ENCODE measurements at regions of chr3 and their contacts with region 1.

Region 1: DNA sequence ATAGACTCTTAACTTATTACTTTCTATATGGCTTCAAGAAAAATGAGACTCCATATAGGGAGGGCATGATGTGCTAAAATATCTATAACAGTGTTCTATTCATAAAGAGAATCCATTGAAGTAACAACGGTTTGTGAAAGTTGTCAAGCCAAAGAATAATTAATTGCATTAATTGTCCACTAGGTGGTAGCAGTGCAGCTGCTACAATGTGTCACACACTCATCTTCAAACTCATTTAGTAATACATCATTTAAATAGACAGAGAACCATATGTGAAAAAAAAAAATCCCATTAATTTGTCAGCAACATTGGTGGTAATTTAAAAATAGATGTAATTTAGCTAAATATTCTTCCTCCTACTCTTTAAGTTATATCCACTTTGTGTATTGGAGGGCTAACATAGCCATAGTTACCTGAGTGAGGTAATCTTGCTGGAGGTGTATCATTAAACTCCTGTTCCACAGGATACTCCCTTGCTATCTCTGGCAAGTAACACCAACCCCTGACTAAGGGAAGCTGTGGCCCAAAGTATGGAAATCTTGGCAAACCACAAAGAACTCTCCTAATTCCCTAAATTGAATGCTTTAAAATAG is 3.7 kb upstream of the CPA3 start:
- DNase-seq: no peak
- ATAC-seq: peak; percentile 80
- H3K4me3 ChIP-seq: no peak overlapping the region
- H3K27ac ChIP-seq: no peak overlapping the region
- H3K4me1 ChIP-seq: no peaks in the 10 kb centered on the region
- H3K27me3 ChIP-seq: peaks cover 0 to 8% of the 10 kb centered on the region in 2 experiments; a peak in 1 of 4 replicates
- CTCF ChIP-seq: peak; percentile 45 to 65 (median 46); a peak in 5 of 6 replicates
- EP300 ChIP-seq: no peak
- POLR2A ChIP-seq: no peak
- RAD21 ChIP-seq: peak; percentile 71

Region 2: GRCh38 chr3:148077318-148077923 is 784.0 kb before region 1 on chr3:
- CTCF ChIA-PET with region 1: no interaction called
- POLR2A ChIA-PET with region 1: no interaction called
- RAD21 ChIA-PET with region 1: no interaction called
- SMC1A ChIA-PET with region 1: no interaction called
- in situ Hi-C with region 1: no loop called
- intact Hi-C with region 1: no loop called
- DNase-seq: no peak
- ATAC-seq: peak; percentile 76
- H3K4me3 ChIP-seq: no peak overlapping the region
- H3K27ac ChIP-seq: no peak overlapping the region
- H3K4me1 ChIP-seq: no peaks in the 10 kb centered on the region
- H3K27me3 ChIP-seq: no peaks in the 10 kb centered on the region
- CTCF ChIP-seq: peak; percentile 32 to 50 (median 36); a peak in 4 of 6 replicates
- EP300 ChIP-seq: no peak
- POLR2A ChIP-seq: no peak
- RAD21 ChIP-seq: no peak

Region 3: GRCh38 chr3:148943506-148944205 is 82.3 kb after region 1 on chr3:
- CTCF ChIA-PET with region 1: interaction called, 179 read pairs
- POLR2A ChIA-PET with region 1: no interaction called
- RAD21 ChIA-PET with region 1: interaction called, 5 read pairs
- SMC1A ChIA-PET with region 1: interaction called, 19 read pairs
- in situ Hi-C with region 1: loop called (anchors 5 kb)
- intact Hi-C with region 1: loop called (anchors 1 kb)
- DNase-seq: peak; percentile 19
- ATAC-seq: peak; percentile 97
- H3K4me3 ChIP-seq: no peak overlapping the region
- H3K27ac ChIP-seq: no peak overlapping the region
- H3K4me1 ChIP-seq: no peaks in the 10 kb centered on the region
- H3K27me3 ChIP-seq: peaks cover 0 to 3% of the 10 kb centered on the region in 2 experiments; a peak in 3 of 4 replicates
- CTCF ChIP-seq: peak; percentile 69 to 78 (median 75)
- EP300 ChIP-seq: no peak
- POLR2A ChIP-seq: no peak
- RAD21 ChIP-seq: peak; percentile 76

Region 4: DNA sequence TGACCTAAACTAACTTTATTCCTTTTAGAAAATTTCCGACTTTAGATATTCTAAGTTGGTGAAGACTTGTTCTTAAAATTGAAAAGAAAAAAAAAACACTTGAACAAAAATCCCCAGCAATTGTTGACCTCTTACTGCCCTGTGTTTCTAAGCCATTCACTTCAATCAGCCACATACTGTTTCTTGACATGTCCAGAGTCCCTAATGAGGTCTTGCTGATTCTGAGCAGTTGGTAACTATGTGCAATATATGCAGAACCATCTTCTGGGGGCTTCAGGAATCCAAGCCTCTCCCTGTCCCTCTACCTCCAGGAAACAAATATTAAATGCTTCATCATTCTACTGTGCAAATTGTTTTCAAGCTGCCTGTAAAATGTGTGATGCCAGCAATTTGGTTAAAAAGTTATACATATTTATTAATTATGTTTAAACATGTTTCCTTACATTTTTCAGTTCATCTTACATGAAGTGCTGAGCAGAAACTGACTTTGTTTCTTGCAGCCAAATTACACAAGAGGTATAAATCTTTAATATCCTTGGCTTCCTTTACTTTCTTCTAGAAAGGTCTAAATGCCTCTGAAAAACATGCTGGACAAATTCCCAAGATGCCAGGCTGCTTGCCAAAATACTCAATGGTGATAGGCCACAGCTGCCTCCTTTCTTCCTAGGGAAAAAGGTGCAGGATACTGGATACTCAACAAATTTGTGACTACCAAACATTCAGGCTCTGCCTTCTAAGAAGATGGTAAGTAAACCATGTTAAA is 110.2 kb after region 1 on chr3:
- CTCF ChIA-PET with region 1: no interaction called
- POLR2A ChIA-PET with region 1: no interaction called
- RAD21 ChIA-PET with region 1: no interaction called
- SMC1A ChIA-PET with region 1: no interaction called
- in situ Hi-C with region 1: no loop called
- intact Hi-C with region 1: no loop called
- DNase-seq: no peak
- ATAC-seq: no peak
- H3K4me3 ChIP-seq: no peak overlapping the region
- H3K27ac ChIP-seq: no peak overlapping the region
- H3K4me1 ChIP-seq: no peaks in the 10 kb centered on the region
- H3K27me3 ChIP-seq: no peaks in the 10 kb centered on the region
- CTCF ChIP-seq: no peak
- EP300 ChIP-seq: no peak
- POLR2A ChIP-seq: no peak
- RAD21 ChIP-seq: no peak

Region 5: GRCh38 chr3:149114458-149114857 is 253.1 kb after region 1 on chr3:
- CTCF ChIA-PET with region 1: no interaction called
- POLR2A ChIA-PET with region 1: no interaction called
- RAD21 ChIA-PET with region 1: no interaction called
- SMC1A ChIA-PET with region 1: no interaction called
- in situ Hi-C with region 1: no loop called
- intact Hi-C with region 1: loop called (anchors 5 kb)
- DNase-seq: no peak
- ATAC-seq: no peak
- H3K4me3 ChIP-seq: no peak overlapping the region
- H3K27ac ChIP-seq: no peak overlapping the region
- H3K4me1 ChIP-seq: no peaks in the 10 kb centered on the region
- H3K27me3 ChIP-seq: no peaks in the 10 kb centered on the region
- CTCF ChIP-seq: no peak
- EP300 ChIP-seq: no peak
- POLR2A ChIP-seq: no peak
- RAD21 ChIP-seq: no peak

Region 6: DNA sequence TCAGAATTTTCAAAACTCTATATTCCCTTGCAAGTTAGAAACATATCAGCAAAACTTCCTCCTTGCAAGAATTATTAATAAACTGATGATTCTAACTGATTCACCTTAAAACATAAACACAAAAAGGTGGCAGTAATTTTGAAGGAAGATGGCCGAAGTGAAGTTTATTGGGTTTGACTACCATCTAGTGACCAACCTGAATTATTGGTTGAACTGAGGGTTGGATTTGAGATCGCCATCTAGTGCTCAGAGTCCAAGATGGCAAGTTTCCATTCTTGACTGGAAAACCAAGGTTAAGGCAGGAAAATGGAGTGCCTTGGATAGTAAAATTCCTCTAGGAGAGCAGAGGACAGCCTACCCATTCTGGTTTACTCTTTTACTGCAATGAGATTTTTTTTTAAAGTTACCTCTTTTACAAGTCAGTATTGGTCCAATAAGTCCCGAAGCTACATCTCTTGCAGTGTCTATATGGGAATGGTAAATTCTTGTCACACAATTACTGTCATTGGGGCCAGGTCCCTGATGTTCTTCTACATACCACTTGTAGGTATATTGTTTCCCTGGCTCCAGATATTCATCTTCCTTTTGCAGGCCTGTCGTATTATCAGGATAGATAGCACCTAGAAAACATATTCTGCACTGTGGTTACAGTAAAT is 411.9 kb after region 1 on chr3:
- CTCF ChIA-PET with region 1: interaction called, 3 read pairs
- POLR2A ChIA-PET with region 1: no interaction called
- RAD21 ChIA-PET with region 1: no interaction called
- SMC1A ChIA-PET with region 1: interaction called, 4 read pairs
- in situ Hi-C with region 1: loop called (anchors 10 kb)
- intact Hi-C with region 1: loop called (anchors 10 kb)
- DNase-seq: peak; percentile 45
- ATAC-seq: peak; percentile 91
- H3K4me3 ChIP-seq: no peak overlapping the region
- H3K27ac ChIP-seq: no peak overlapping the region
- H3K4me1 ChIP-seq: peaks cover 4% of the 10 kb centered on the region; the same call in 1 of the 2 replicates
- H3K27me3 ChIP-seq: no peaks in the 10 kb centered on the region
- CTCF ChIP-seq: peak; percentile 82 to 100 (median 97); a peak in 5 of 6 replicates
- EP300 ChIP-seq: no peak
- POLR2A ChIP-seq: no peak
- RAD21 ChIP-seq: peak; percentile 100